Pancreas (tissue), 10 donors: ENCODE measurements at regions of chr15 and their contacts with region 1.

Region 1: DNA sequence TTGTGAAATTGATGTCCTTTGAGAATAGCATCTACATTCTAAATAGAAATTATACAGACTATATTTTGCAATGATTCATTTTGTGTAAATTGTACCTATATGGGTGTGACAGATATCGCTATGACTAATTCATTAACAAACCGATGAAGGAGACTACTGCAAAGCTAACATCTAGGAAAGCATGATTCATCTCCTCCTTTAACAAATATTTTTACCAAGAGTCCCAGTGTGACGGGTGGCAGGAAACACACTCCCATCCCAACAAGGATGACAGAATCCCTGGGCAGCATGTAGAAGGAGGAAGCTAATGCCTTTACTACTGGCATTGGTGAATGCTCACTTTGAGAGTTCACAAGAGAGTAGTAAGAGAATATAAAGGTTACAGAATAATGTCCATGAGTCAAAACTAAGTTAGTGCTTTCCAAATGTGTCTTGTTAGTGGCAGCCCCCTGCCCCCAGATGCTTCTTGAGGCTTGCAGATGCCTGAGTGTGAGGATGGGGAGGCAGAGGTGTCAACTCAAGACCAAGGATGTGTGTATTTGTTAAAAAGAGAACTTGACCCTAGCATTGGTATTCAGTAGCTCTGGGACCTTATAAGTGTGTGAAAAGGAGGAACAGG is 180.6 kb downstream of the FMN1 start:
- DNase-seq: no peak
- ATAC-seq: peak in 2 of 4 donors; percentile 58 to 64
- H3K4me3 ChIP-seq: no peak overlapping the region
- H3K27ac ChIP-seq: no peak overlapping the region
- H3K4me1 ChIP-seq: no peaks in the 10 kb centered on the region
- H3K27me3 ChIP-seq: no peaks in the 10 kb centered on the region
- CTCF ChIP-seq: no peak

Region 2: DNA sequence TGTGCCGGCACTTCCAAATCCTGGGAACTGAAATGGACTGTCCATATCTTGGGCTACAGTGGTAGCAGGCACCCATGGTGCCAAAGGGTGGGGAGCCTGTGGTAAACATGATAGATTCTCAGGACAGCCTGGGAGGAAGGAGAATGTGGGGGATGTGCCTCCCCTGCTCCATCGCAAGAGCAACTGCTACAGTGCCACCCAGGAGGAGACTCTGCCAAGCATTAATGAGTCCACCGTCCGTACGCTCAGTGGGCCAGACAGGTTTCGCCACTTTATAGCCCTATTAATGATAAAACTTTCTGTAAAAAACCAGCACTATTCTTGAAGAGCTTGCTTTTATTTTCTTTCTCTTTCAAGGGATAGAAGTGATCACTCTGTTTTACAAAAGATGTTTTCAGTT is 105.3 kb after region 1 on chr15:
- intact Hi-C with region 1: no loop called
- DNase-seq: no peak
- ATAC-seq: peak in 1 of 4 donors; percentile 39
- H3K4me3 ChIP-seq: no peak overlapping the region
- H3K27ac ChIP-seq: no peak overlapping the region
- H3K4me1 ChIP-seq: no peaks in the 10 kb centered on the region
- H3K27me3 ChIP-seq: no peaks in the 10 kb centered on the region
- CTCF ChIP-seq: no peak

Region 3: DNA sequence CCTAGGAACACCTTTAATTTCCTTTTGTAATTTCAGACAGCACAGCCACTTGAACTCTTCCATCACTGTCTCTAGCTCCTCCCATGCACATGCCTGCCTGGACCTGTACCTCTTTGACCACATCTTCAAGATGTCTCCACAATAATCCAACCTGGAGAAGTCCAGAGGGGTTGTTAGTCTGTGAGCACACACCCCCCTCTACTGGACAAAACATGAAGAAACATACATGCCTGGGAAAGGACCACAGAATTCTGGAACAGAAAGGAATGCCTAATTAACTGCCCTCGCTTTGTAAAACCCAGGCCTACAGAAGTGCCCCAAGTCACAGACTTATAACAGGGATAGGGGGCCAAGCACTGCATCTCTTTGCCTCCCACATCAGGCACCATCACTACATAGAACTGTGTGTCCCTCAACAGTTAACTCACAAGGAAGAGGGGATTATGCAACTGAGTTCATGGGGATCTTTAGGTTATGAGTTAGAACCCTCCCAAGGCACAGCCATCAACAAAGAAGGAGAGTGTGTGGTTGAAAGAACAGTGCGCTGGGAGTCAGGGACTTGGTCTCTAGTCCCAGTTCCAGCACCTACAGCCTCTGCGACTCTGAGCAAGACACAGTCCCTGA is 118.9 kb after region 1 on chr15:
- intact Hi-C with region 1: loop called in 1 of 3 experiments (anchors 10 kb)
- DNase-seq: peak in 1 of 6 donors; percentile 20
- ATAC-seq: peak; percentile 53 to 91 (median 88)
- H3K4me3 ChIP-seq: no peak overlapping the region
- H3K27ac ChIP-seq: no peak overlapping the region
- H3K4me1 ChIP-seq: no peaks in the 10 kb centered on the region
- H3K27me3 ChIP-seq: no peaks in the 10 kb centered on the region
- CTCF ChIP-seq: peak; percentile 17 to 41 (median 33)